ENCODE measurements at regions of chr17 and their contacts with region 1.

Region 1: DNA sequence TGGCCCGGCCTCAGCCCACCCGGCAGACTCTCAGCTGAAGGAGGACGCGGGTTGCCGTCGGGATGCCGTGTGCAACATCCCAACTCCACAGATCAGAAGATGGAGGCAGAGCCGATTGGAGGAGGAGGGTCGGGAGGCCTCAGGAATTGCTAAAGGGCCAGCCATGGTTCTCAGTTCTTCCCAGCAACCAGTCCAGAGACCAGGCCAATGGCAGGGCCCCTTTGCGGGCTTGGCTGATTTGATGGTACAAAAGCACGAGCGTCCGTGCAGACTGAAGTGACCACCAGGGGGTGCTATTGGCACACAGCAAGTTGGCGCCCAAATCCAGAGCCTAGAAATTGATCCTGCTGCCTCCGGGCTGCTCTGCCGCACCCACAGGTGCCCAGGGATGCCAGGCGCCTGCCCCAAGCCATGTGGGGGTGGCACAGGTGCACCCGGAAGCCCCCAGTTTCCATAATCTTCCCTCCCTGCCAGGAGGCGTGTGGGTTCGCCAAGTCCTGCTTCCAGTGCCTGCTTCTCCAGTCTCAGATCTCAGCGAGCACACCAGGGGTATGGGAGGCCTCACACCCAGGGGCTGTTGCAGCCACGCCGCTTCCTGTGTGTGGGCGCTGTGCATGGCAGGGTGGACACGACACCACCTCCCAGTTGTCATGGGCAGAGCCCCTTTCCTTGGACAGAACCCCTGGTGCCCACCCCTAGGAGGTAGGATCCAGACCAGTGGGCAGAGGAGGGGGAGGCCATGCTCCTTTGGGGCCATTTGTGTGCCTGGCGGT is 7.1 kb upstream of the TEX19 start:
- DNase-seq: peak; percentile 91
- CTCF ChIP-seq: peak; percentile 91

Region 2: DNA sequence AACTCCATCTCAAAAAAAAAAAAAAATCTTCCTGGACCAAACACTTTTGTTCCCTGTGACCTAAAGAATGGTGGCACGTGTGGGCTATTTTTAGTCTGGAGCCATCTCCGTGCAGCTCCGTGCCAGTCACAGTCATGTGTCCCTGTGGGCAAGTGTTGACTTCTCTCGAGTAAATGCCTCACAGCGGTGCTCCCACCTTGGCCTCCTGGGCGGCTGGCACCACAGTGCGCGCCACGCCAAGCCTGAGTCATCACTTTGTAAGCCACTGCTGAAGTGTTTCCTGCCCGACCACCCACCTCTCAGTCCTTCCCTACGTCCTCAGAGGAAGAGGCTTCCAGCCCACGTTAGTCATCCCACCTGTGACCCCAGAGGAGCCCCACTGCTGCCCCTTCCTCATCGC is 55.4 kb after region 1 on chr17:
- in situ Hi-C with region 1: loop called (anchors 5 kb)
- DNase-seq: no peak
- CTCF ChIP-seq: no peak

Region 3: GRCh38 chr17:83012868-83013778 is 661.2 kb after region 1 on chr17:
- in situ Hi-C with region 1: no loop called
- DNase-seq: no peak
- CTCF ChIP-seq: no peak

Measured in GM13976 (cell line).